ENCODE measurements at regions of chr12 and their contacts with region 1.

Region 1: GRCh38 chr12:101823891-101824290 is 6.9 kb downstream of the GNPTAB start:
- DNase-seq: no peak
- ATAC-seq: peak; percentile 81
- H3K4me3 ChIP-seq: no peak overlapping the region
- H3K27ac ChIP-seq: peak overlapping the region; percentile 28; the same call in 1 of the 2 replicates
- H3K4me1 ChIP-seq: peaks cover 17% of the 10 kb centered on the region
- H3K27me3 ChIP-seq: no peaks in the 10 kb centered on the region
- CTCF ChIP-seq: peak; percentile 11 to 47 (median 39); a peak in 4 of 6 replicates
- EP300 ChIP-seq: no peak
- POLR2A ChIP-seq: no peak
- RAD21 ChIP-seq: no peak

Region 2: GRCh38 chr12:101782273-101782731 is 41.6 kb before region 1 on chr12:
- CTCF ChIA-PET with region 1: interaction called, 63 read pairs
- POLR2A ChIA-PET with region 1: interaction called, 4 read pairs
- RAD21 ChIA-PET with region 1: interaction called, 14 read pairs
- SMC1A ChIA-PET with region 1: interaction called, 30 read pairs
- in situ Hi-C with region 1: no loop called
- intact Hi-C with region 1: no loop called
- DNase-seq: no peak
- ATAC-seq: no peak; the same call in 2 of the 3 replicates
- H3K4me3 ChIP-seq: no peak overlapping the region
- H3K27ac ChIP-seq: no peak overlapping the region
- H3K4me1 ChIP-seq: no peaks in the 10 kb centered on the region
- H3K27me3 ChIP-seq: no peaks in the 10 kb centered on the region
- CTCF ChIP-seq: no peak
- EP300 ChIP-seq: no peak
- POLR2A ChIP-seq: no peak
- RAD21 ChIP-seq: no peak

Region 3: GRCh38 chr12:101792051-101792931 is 31.6 kb before region 1 on chr12:
- CTCF ChIA-PET with region 1: interaction called, 84 read pairs
- POLR2A ChIA-PET with region 1: no interaction called
- RAD21 ChIA-PET with region 1: interaction called, 33 read pairs
- SMC1A ChIA-PET with region 1: interaction called, 44 read pairs
- in situ Hi-C with region 1: no loop called
- intact Hi-C with region 1: loop called (anchors 5 kb)
- DNase-seq: no peak
- ATAC-seq: peak; percentile 38; the same call in 1 of the 3 replicates
- H3K4me3 ChIP-seq: no peak overlapping the region
- H3K27ac ChIP-seq: no peak overlapping the region
- H3K4me1 ChIP-seq: peaks cover 10% of the 10 kb centered on the region
- H3K27me3 ChIP-seq: no peaks in the 10 kb centered on the region
- CTCF ChIP-seq: peak; percentile 15 to 36 (median 19); a peak in 4 of 6 replicates
- EP300 ChIP-seq: no peak
- POLR2A ChIP-seq: no peak
- RAD21 ChIP-seq: peak; percentile 17; the same call in 1 of the 2 replicates

Region 4: DNA sequence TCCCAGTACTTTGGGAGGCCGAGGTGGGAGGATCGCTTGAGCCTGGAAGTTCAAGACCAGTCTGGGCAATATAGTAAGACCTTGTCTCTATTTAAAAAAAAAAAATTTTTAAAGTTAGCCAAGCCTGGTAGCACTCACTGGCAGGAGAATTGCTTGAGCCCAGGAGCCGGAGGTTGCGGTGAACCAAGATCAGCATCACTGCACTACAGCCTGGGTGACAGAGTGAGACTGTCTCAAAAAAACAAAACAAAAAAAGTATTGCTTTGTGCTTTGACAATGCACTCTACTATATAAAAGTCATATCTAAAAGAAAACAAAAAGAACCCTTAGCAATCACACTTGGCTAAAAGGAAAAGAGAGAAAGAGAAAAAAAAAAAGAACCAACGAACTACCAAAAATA is 19.9 kb before region 1 on chr12:
- CTCF ChIA-PET with region 1: interaction called, 7 read pairs
- POLR2A ChIA-PET with region 1: interaction called, 7 read pairs
- RAD21 ChIA-PET with region 1: interaction called, 3 read pairs
- SMC1A ChIA-PET with region 1: interaction called, 32 read pairs
- in situ Hi-C with region 1: no loop called
- intact Hi-C with region 1: no loop called
- DNase-seq: no peak
- ATAC-seq: no peak
- H3K4me3 ChIP-seq: no peak overlapping the region
- H3K27ac ChIP-seq: no peak overlapping the region
- H3K4me1 ChIP-seq: no peaks in the 10 kb centered on the region
- H3K27me3 ChIP-seq: no peaks in the 10 kb centered on the region
- CTCF ChIP-seq: no peak
- EP300 ChIP-seq: no peak
- POLR2A ChIP-seq: no peak
- RAD21 ChIP-seq: no peak

Region 5: DNA sequence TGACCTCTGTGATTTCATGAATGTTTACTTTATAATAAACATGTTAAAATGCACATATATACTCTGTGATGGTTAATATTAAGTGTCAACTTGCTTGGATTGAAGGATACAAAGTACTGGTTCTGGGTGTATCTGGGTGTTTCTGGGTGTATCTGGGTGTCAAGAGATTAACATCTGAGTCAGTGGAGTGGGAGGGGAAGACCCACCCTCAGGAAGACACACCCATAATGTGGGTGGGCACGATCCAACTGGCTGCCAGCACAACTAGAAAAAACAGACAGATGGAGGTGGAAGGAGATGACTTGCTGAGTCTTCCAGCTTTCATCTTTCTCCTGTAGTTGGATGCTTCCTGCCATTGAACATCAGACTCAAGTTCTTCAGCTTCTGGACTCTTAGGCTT is 284.1 kb after region 1 on chr12:
- CTCF ChIA-PET with region 1: no interaction called
- POLR2A ChIA-PET with region 1: no interaction called
- RAD21 ChIA-PET with region 1: no interaction called
- SMC1A ChIA-PET with region 1: no interaction called
- in situ Hi-C with region 1: no loop called
- intact Hi-C with region 1: no loop called
- DNase-seq: no peak
- ATAC-seq: no peak
- H3K4me3 ChIP-seq: no peak overlapping the region
- H3K27ac ChIP-seq: no peak overlapping the region
- H3K4me1 ChIP-seq: no peaks in the 10 kb centered on the region
- H3K27me3 ChIP-seq: no peaks in the 10 kb centered on the region
- CTCF ChIP-seq: no peak
- EP300 ChIP-seq: no peak
- POLR2A ChIP-seq: no peak
- RAD21 ChIP-seq: no peak

Measured in GM12878 (cell line).